ENCODE measurements at regions of chrX and their contacts with region 1.

Region 1: GRCh38 chrX:96684339-96685209 is at the start of gene DIAPH2:
- DNase-seq: peak; percentile 65 to 87 (median 78)
- ATAC-seq: peak; percentile 84 to 96 (median 95)
- H3K4me3 ChIP-seq: peak within 1 kb of the TSS; percentile 54 to 96 (median 80)
- H3K27ac ChIP-seq: peak within 1 kb of the TSS; percentile 65 to 86 (median 79)
- H3K4me1 ChIP-seq: peaks cover 0 to 12% (median under 1%) of the 10 kb centered on the region in 12 donors
- H3K27me3 ChIP-seq: peaks cover 0 to 31% (median 0%) of the 10 kb centered on the region in 9 donors
- CTCF ChIP-seq: peak in 6 of 12 donors; percentile 7 to 25 (median 18)
- POLR2A ChIP-seq: peak in 1 of 2 donors; percentile 24
- total RNA-seq, gene DIAPH2: 9.0 to 18.8 (median 14.3) TPM

Region 2: GRCh38 chrX:96372313-96373046 is 312.1 kb before region 1 on chrX:
- intact Hi-C with region 1: loop called in 1 of 10 experiments (anchors 5 kb)
- DNase-seq: peak in 1 of 5 donors; percentile 5
- ATAC-seq: peak in 3 of 4 donors; percentile 27 to 64 (median 51)
- H3K4me3 ChIP-seq: peak overlapping the region in 3 of 12 donors; percentile 16 to 29 (median 24)
- H3K27ac ChIP-seq: no peak overlapping the region
- H3K4me1 ChIP-seq: no peaks in the 10 kb centered on the region
- H3K27me3 ChIP-seq: no peaks in the 10 kb centered on the region
- CTCF ChIP-seq: peak; percentile 46 to 72 (median 62)
- POLR2A ChIP-seq: no peak

Region 3: DNA sequence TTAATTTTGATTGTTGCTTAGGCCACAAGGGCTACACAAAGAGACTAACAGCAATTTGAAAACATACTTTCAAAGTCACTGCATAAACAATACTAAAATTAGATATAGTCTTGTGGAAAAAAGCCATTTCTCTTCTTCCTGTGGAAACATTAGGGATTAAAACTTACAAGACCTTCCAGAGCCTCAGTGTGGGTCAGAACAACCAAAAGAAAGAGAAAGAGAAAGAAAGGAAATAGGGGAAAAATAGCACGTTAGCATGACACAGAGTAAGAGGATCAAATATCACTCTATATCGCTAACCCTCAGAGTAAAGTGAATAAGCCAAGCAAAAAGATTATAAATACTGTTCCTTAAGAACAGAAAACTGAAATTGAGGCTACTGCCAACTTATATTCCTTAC is 127.7 kb before region 1 on chrX:
- intact Hi-C with region 1: loop called in 1 of 10 experiments (anchors 10 kb)
- DNase-seq: no peak
- ATAC-seq: no peak
- H3K4me3 ChIP-seq: peak overlapping the region in 2 of 12 donors; percentile 14 to 18
- H3K27ac ChIP-seq: peak overlapping the region in 4 of 12 donors; percentile 4 to 60 (median 40)
- H3K4me1 ChIP-seq: peaks cover 0 to 4% (median 0%) of the 10 kb centered on the region in 12 donors
- H3K27me3 ChIP-seq: peaks cover 0 to 5% (median 0%) of the 10 kb centered on the region in 9 donors
- CTCF ChIP-seq: no peak
- POLR2A ChIP-seq: no peak

Region 4: GRCh38 chrX:96764864-96765263 is 80.3 kb after region 1 on chrX:
- intact Hi-C with region 1: loop called in 1 of 10 experiments (anchors 10 kb)
- DNase-seq: no peak
- ATAC-seq: no peak
- H3K4me3 ChIP-seq: no peak overlapping the region
- H3K27ac ChIP-seq: no peak overlapping the region
- H3K4me1 ChIP-seq: peaks cover 0 to 4% (median 0%) of the 10 kb centered on the region in 12 donors
- H3K27me3 ChIP-seq: peaks cover 0 to 11% (median 0%) of the 10 kb centered on the region in 9 donors
- CTCF ChIP-seq: no peak
- POLR2A ChIP-seq: no peak

Measured in heart left ventricle (tissue), 16 donors.